ENCODE measurements at regions of chr10 and their contacts with region 1.

Region 1: GRCh38 chr10:97731346-97732051 is 5.4 kb upstream of the ZFYVE27 start:
- DNase-seq: peak; percentile 61
- H3K4me3 ChIP-seq: no peak overlapping the region
- H3K27ac ChIP-seq: no peak overlapping the region
- H3K27me3 ChIP-seq: no peaks in the 10 kb centered on the region
- CTCF ChIP-seq: peak; percentile 91

Region 2: GRCh38 chr10:96803318-96803664 is 928.2 kb before region 1 on chr10:
- CTCF ChIA-PET with region 1: interaction called, 10 read pairs
- POLR2A ChIA-PET with region 1: no interaction called
- DNase-seq: no peak
- H3K4me3 ChIP-seq: no peak overlapping the region
- H3K27ac ChIP-seq: no peak overlapping the region
- H3K27me3 ChIP-seq: no peaks in the 10 kb centered on the region
- CTCF ChIP-seq: no peak

Region 3: GRCh38 chr10:97701438-97702069 is 29.9 kb before region 1 on chr10:
- CTCF ChIA-PET with region 1: interaction called, 316 read pairs
- POLR2A ChIA-PET with region 1: interaction called, 3 read pairs
- DNase-seq: peak; percentile 61
- H3K4me3 ChIP-seq: no peak overlapping the region
- H3K27ac ChIP-seq: no peak overlapping the region
- H3K27me3 ChIP-seq: no peaks in the 10 kb centered on the region
- CTCF ChIP-seq: peak; percentile 94

Region 4: GRCh38 chr10:97759158-97759887 is 27.8 kb after region 1 on chr10:
- CTCF ChIA-PET with region 1: no interaction called
- POLR2A ChIA-PET with region 1: no interaction called
- DNase-seq: peak; percentile 20
- H3K4me3 ChIP-seq: no peak overlapping the region
- H3K27ac ChIP-seq: no peak overlapping the region
- H3K27me3 ChIP-seq: no peaks in the 10 kb centered on the region
- CTCF ChIP-seq: peak; percentile 94